ENCODE measurements at regions of chr6 and their contacts with region 1.

Region 1: GRCh38 chr6:73329201-73329600 is 24.9 kb downstream of the DPPA5 start:
- DNase-seq: no peak
- H3K4me3 ChIP-seq: no peak overlapping the region
- H3K4me3 Mint-ChIP-seq: no peak overlapping the region
- H3K27ac ChIP-seq: no peak overlapping the region
- H3K27ac Mint-ChIP-seq: no peak overlapping the region
- H3K4me1 ChIP-seq: no peaks in the 10 kb centered on the region
- H3K4me1 Mint-ChIP-seq: peaks cover 0 to 4% (median 3%) of the 10 kb centered on the region in 4 donors
- H3K27me3 ChIP-seq: no peaks in the 10 kb centered on the region
- H3K27me3 Mint-ChIP-seq: peaks cover 8 to 15% of the 10 kb centered on the region in 2 donors

Region 2: DNA sequence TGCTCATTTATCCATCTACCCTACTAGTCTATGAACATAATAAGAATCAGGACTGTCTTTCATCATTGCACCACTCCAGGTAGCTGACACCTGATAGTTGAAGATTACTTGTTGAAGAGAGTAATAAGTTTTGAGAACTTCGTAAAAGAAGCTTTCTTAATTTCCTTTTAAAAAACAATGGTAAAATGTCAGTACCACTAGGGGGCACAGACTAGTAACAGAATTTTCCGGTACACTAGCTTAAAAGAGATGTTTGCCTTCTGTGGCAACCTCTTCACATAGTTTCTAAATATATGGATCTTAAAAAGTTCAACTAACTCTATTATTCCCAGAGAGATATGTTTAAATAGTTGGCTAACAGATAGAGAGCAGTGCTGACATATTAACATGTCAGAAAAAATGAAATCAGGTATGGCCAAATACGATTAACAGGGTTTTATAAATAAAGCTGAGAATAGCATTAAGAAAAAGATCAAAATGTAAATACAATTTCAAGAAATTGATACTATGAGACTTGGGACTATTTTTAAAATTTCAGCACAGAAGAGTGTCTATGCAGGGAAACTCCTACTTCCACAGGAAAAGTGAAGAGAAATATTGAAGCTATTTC is 712.7 kb before region 1 on chr6:
- CTCF ChIA-PET with region 1: interaction called, 22 read pairs
- POLR2A ChIA-PET with region 1: interaction called, 4 read pairs
- intact Hi-C with region 1: loop called (anchors 1 kb)
- DNase-seq: peak in 4 of 5 donors; percentile 8 to 32 (median 22)
- H3K4me3 ChIP-seq: no peak overlapping the region
- H3K4me3 Mint-ChIP-seq: no peak overlapping the region
- H3K27ac ChIP-seq: no peak overlapping the region
- H3K27ac Mint-ChIP-seq: peak overlapping the region in 2 of 7 donors; percentile 14 to 36
- H3K4me1 ChIP-seq: peaks cover 36% of the 10 kb centered on the region
- H3K4me1 Mint-ChIP-seq: peaks cover 20 to 41% (median 29%) of the 10 kb centered on the region in 4 donors
- H3K27me3 ChIP-seq: no peaks in the 10 kb centered on the region
- H3K27me3 Mint-ChIP-seq: no peaks in the 10 kb centered on the region

Region 3: DNA sequence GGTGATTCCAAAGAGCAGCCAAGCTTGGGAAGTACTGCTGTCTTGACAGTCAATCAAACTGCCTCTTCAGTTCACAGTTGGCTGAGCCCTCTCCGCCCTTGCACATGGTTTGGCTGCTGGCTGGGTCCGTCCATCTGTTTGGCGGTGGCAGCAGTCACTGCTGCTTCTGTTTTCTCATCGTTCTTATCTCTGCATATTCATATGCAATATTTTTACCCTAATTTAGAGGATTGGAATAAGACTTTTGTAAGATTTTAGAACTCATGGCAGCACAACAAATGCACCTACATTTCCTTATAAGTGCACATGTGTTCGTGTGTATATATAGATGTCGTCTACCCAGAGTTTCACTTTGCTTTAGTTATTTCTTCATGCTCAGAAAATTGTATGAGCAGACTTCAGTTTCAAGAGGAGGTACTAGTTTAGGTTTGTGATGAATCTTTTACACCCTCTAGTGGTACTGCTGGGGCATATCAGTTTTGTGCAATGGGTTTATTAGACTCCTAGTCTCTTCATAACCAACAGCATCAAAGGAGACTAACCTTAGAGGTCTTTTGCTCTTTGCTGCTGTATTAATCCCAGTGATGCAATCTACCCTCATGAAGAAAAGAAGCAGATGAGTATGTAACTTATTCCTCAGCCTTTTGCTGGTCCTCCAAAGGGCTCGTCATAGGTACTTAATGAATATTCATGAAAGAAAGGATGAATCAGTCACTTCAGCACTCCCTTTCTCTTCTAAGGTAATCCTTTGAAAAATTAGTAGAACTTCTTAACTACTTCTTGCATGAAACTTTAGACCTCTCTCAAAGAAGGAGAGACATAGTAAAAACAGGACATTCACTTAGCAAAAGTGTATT is 148.2 kb before region 1 on chr6:
- CTCF ChIA-PET with region 1: interaction called, 4 read pairs
- POLR2A ChIA-PET with region 1: no interaction called
- intact Hi-C with region 1: loop called (anchors 1 kb)
- DNase-seq: peak; percentile 32 to 46 (median 43)
- H3K4me3 ChIP-seq: no peak overlapping the region
- H3K4me3 Mint-ChIP-seq: peak overlapping the region in 7 of 8 donors; percentile 0 to 61 (median 45)
- H3K27ac ChIP-seq: no peak overlapping the region
- H3K27ac Mint-ChIP-seq: no peak overlapping the region
- H3K4me1 ChIP-seq: no peaks in the 10 kb centered on the region
- H3K4me1 Mint-ChIP-seq: peaks cover 0 to 5% (median 4%) of the 10 kb centered on the region in 4 donors
- H3K27me3 ChIP-seq: no peaks in the 10 kb centered on the region
- H3K27me3 Mint-ChIP-seq: peaks cover 2 to 3% of the 10 kb centered on the region in 2 donors

Region 4: GRCh38 chr6:73285674-73286283 is 43.4 kb before region 1 on chr6:
- CTCF ChIA-PET with region 1: interaction called, 40 read pairs
- POLR2A ChIA-PET with region 1: no interaction called
- intact Hi-C with region 1: loop called (anchors 1 kb)
- DNase-seq: peak in 3 of 5 donors; percentile 8 to 13 (median 12)
- H3K4me3 ChIP-seq: no peak overlapping the region
- H3K4me3 Mint-ChIP-seq: no peak overlapping the region
- H3K27ac ChIP-seq: no peak overlapping the region
- H3K27ac Mint-ChIP-seq: no peak overlapping the region
- H3K4me1 ChIP-seq: no peaks in the 10 kb centered on the region
- H3K4me1 Mint-ChIP-seq: no peaks in the 10 kb centered on the region
- H3K27me3 ChIP-seq: no peaks in the 10 kb centered on the region
- H3K27me3 Mint-ChIP-seq: no peaks in the 10 kb centered on the region

Region 5: DNA sequence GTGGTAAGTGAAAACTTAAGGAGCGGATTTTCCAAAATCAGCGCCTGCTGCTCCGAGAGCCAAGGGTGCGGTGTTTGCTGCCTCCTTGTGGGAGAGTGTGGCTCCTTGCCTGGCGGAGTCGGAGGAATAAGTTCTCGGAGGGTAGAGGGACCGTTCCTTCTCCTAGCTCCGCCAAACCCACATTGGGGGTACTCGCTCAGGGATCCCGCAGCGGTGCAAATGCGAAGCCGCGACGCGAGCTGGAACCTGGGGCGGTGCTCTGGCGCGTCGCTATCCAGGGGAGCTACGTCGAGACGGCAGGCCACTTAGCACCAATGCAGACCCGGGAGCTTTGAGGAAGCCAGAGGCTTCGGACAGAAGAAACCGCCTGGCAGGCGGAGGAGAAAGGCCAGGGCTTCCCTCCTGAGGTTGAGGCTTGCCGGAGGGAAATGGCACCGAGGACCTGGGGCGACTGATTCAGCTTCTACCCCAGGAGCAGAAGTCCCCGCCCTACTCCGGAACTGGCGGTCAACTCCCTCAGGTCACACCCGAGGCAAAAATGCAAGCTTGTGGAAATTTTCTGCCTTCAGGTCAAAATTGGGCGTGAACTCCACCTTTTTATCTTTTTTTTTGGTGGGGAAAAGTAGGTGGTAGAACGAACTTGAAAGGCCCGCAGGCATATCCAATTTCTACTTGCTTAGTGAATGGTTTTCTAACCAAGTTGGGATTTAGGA is 59.8 kb after region 1 on chr6:
- CTCF ChIA-PET with region 1: interaction called, 20 read pairs
- POLR2A ChIA-PET with region 1: no interaction called
- intact Hi-C with region 1: loop called (anchors 1 kb)
- DNase-seq: peak; percentile 43 to 64 (median 52)
- H3K4me3 ChIP-seq: peak overlapping the region; percentile 57 to 71
- H3K4me3 Mint-ChIP-seq: peak overlapping the region; percentile 86 to 88 (median 87)
- H3K27ac ChIP-seq: peak overlapping the region; percentile 65
- H3K27ac Mint-ChIP-seq: peak overlapping the region; percentile 82 to 93 (median 90)
- H3K4me1 ChIP-seq: peaks cover 30% of the 10 kb centered on the region
- H3K4me1 Mint-ChIP-seq: peaks cover 17 to 40% (median 28%) of the 10 kb centered on the region in 4 donors
- H3K27me3 ChIP-seq: no peaks in the 10 kb centered on the region
- H3K27me3 Mint-ChIP-seq: no peaks in the 10 kb centered on the region

Region 6: GRCh38 chr6:73409395-73409794 is 80.2 kb after region 1 on chr6:
- CTCF ChIA-PET with region 1: no interaction called
- POLR2A ChIA-PET with region 1: no interaction called
- intact Hi-C with region 1: no loop called
- DNase-seq: no peak
- H3K4me3 ChIP-seq: no peak overlapping the region
- H3K4me3 Mint-ChIP-seq: no peak overlapping the region
- H3K27ac ChIP-seq: no peak overlapping the region
- H3K27ac Mint-ChIP-seq: no peak overlapping the region
- H3K4me1 ChIP-seq: no peaks in the 10 kb centered on the region
- H3K4me1 Mint-ChIP-seq: peaks cover 0 to 2% (median 0%) of the 10 kb centered on the region in 4 donors
- H3K27me3 ChIP-seq: no peaks in the 10 kb centered on the region
- H3K27me3 Mint-ChIP-seq: no peaks in the 10 kb centered on the region

Region 7: DNA sequence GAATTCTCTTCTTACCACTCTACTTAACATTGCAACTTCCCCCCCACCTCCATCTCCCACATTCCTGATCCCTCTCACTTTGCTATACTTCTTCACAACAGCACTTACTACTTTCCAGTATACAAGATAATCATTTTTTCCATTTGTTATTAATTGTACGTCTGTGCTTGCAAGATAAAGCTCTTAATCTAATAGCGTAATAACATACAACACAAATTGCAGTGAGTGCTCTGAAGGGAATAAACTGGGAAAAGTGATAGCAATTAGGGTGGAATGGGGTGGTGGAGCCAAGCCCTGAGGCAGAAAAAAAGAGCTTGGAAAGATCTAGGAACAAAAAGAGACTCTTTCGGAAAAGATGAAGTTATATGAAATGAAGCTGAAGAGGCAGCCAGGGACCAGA is 114.4 kb after region 1 on chr6:
- CTCF ChIA-PET with region 1: no interaction called
- POLR2A ChIA-PET with region 1: no interaction called
- intact Hi-C with region 1: no loop called
- DNase-seq: no peak
- H3K4me3 ChIP-seq: no peak overlapping the region
- H3K4me3 Mint-ChIP-seq: no peak overlapping the region
- H3K27ac ChIP-seq: no peak overlapping the region
- H3K27ac Mint-ChIP-seq: peak overlapping the region in 3 of 7 donors; percentile 2 to 75 (median 73)
- H3K4me1 ChIP-seq: peaks cover 29% of the 10 kb centered on the region
- H3K4me1 Mint-ChIP-seq: peaks cover 27 to 51% (median 37%) of the 10 kb centered on the region in 4 donors
- H3K27me3 ChIP-seq: no peaks in the 10 kb centered on the region
- H3K27me3 Mint-ChIP-seq: no peaks in the 10 kb centered on the region

Region 8: GRCh38 chr6:73585566-73586415 is 256.6 kb after region 1 on chr6:
- CTCF ChIA-PET with region 1: no interaction called
- POLR2A ChIA-PET with region 1: no interaction called
- intact Hi-C with region 1: no loop called
- DNase-seq: peak; percentile 57 to 69 (median 63)
- H3K4me3 ChIP-seq: peak overlapping the region; percentile 54 to 56
- H3K4me3 Mint-ChIP-seq: peak overlapping the region; percentile 78 to 88 (median 84)
- H3K27ac ChIP-seq: peak overlapping the region; percentile 70
- H3K27ac Mint-ChIP-seq: peak overlapping the region; percentile 93 to 99 (median 98)
- H3K4me1 ChIP-seq: peaks cover 26% of the 10 kb centered on the region
- H3K4me1 Mint-ChIP-seq: peaks cover 15 to 34% (median 19%) of the 10 kb centered on the region in 4 donors
- H3K27me3 ChIP-seq: no peaks in the 10 kb centered on the region
- H3K27me3 Mint-ChIP-seq: no peaks in the 10 kb centered on the region

Region 9: DNA sequence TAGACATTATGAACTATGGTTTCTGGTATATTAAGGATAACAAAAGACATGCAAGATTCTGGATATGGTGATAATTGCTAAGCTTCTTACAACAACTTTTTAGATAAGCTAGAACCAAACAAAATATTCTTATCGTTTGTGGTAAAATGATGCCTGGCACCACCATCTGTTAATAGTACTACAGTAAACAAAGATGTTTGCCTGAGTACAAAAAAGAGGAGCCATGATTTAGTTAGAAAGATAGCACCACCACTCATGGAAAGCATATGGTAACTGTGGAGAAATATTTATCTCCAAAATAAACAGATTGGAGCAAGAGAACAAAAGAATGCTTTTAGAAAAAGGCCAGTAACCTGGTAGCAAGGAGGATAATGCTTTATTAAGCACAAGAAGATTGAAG is 1129.4 kb after region 1 on chr6:
- CTCF ChIA-PET with region 1: no interaction called
- POLR2A ChIA-PET with region 1: no interaction called
- intact Hi-C with region 1: no loop called
- DNase-seq: no peak
- H3K4me3 ChIP-seq: no peak overlapping the region
- H3K4me3 Mint-ChIP-seq: no peak overlapping the region
- H3K27ac ChIP-seq: no peak overlapping the region
- H3K27ac Mint-ChIP-seq: no peak overlapping the region
- H3K4me1 ChIP-seq: no peaks in the 10 kb centered on the region
- H3K4me1 Mint-ChIP-seq: no peaks in the 10 kb centered on the region
- H3K27me3 ChIP-seq: no peaks in the 10 kb centered on the region
- H3K27me3 Mint-ChIP-seq: no peaks in the 10 kb centered on the region

Measured in CD4-positive, alpha-beta memory T cell (primary cell).